BJ (cell line): ENCODE measurements at regions of chr4 and their contacts with region 1.

Region 1: DNA sequence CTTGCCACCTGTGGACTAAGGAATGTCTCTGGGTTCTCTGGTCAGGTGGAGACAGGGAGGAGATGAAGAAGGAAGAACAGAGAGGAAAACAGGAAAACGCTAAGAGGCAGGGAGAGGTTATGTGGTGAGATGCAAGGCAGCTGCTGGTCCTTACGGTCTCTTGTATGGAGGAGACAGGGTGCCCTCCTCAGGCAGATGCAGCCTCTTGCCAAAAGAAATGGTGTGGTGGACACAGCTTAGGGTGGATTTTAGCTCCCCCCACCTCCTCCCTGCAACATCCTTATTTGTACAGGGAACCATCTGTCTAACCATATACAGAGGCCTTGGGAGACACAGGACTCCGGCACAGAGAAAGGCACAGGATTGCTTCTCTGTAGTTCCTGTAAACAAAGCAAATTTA is 9.7 kb downstream of the OCIAD2 start:
- DNase-seq: no peak
- H3K4me3 ChIP-seq: no peak overlapping the region
- H3K27me3 ChIP-seq: no peaks in the 10 kb centered on the region
- CTCF ChIP-seq: no peak

Region 2: DNA sequence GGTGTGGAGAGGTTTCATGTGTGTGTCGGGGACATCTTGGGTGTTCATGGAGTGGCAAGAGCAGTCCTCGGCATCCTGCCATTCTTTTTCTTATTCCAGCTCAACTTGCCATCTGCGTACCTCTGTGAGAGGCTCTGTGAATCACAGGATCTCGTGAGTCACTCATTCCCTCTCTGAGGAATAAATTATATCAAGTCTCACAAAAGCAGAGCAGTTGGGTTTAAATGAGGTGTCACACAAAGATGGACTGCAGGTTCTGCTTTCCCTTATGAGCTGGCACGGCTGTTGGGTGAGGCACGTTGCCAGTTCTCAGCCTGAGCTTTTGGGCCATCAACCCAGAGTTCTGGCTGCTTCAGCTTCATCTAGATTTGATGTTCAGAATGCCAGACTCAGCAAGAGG is 16.5 kb after region 1 on chr4:
- CTCF ChIA-PET with region 1: no interaction called
- POLR2A ChIA-PET with region 1: interaction called, 18 read pairs
- DNase-seq: peak; percentile 19
- H3K4me3 ChIP-seq: no peak overlapping the region
- H3K27me3 ChIP-seq: no peaks in the 10 kb centered on the region
- CTCF ChIP-seq: no peak